ENCODE measurements at regions of chr12 and their contacts with region 1.

Region 1: GRCh38 chr12:18250313-18250916 is 10.9 kb upstream of the PIK3C2G start:
- DNase-seq: no peak
- ATAC-seq: peak in 1 of 4 donors; percentile 59
- H3K4me3 ChIP-seq: no peak overlapping the region
- H3K27ac ChIP-seq: no peak overlapping the region
- H3K4me1 ChIP-seq: no peaks in the 10 kb centered on the region
- H3K27me3 ChIP-seq: no peaks in the 10 kb centered on the region
- CTCF ChIP-seq: peak; percentile 41 to 77 (median 64)
- POLR2A ChIP-seq: no peak

Region 2: DNA sequence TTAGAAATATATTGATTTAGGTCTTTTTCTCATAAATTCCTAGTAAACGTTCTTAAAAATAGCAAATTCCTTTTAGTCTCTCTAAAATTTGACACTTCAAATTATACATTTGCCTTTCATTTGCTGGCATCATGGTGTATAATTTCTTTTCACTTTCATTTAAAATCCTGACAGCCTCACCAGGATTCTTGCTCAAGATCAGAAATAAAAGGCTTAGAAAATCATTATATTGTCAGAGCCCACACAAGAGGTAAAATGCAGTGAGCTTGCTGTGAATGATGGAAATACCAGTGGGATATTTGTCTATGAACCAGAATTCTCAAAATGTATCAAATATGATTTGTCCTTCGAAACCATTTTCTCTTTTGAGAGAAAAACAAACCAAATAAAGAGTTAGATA is 67.3 kb before region 1 on chr12:
- intact Hi-C with region 1: no loop called
- DNase-seq: no peak
- ATAC-seq: no peak
- H3K4me3 ChIP-seq: no peak overlapping the region
- H3K27ac ChIP-seq: no peak overlapping the region
- H3K4me1 ChIP-seq: no peaks in the 10 kb centered on the region
- H3K27me3 ChIP-seq: no peaks in the 10 kb centered on the region
- CTCF ChIP-seq: no peak
- POLR2A ChIP-seq: no peak

Region 3: DNA sequence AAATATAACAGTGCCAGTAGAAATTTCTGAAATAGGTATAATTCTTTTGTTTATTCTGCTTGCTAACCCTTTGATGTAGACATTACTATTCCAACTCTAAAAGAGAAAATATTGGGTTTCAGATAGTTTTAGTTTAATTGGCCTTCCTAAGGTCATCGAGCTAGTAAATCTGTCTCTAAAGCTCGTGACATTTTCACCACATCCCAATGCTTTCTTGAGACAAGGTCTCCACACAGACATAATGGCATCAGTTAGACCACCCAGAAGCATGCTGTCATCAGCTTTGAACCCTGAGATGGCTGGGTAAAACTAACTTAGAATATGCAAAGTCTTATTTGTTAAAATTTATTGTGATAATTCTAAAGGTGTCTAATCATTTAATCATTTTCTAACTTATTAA is 62.9 kb after region 1 on chr12:
- intact Hi-C with region 1: loop called in 1 of 10 experiments (anchors 10 kb)
- DNase-seq: no peak
- ATAC-seq: no peak
- H3K4me3 ChIP-seq: no peak overlapping the region
- H3K27ac ChIP-seq: no peak overlapping the region
- H3K4me1 ChIP-seq: no peaks in the 10 kb centered on the region
- H3K27me3 ChIP-seq: no peaks in the 10 kb centered on the region
- CTCF ChIP-seq: no peak
- POLR2A ChIP-seq: no peak

Region 4: DNA sequence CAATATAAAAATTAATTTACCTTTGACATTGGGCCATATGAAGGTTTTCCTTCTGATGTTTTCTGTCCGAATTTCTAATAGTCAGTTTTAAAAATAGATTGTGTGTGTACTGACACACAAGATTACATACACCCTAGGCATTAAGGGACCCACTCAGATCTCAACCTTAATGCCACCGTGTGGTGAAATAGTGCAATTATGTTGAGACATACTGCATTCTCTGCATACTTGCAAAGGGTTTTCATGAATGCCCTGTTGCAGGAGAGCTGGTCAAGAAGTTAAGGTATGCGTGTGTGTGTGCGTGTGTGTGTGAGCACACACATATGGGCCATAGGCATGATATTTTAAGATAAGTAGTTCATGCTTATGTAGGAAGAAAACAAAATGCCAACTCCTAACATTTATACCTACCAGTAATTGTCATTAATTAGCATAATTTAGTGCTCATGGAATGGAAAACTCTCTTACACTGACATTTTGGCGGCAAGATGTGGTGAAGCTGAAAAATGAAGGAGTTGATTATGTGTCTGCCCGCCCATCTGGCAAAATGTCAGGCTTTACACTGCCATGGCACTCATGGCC is 69.7 kb after region 1 on chr12:
- intact Hi-C with region 1: loop called in 2 of 10 experiments (anchors 2 to 10 kb)
- DNase-seq: peak in 1 of 5 donors; percentile 10
- ATAC-seq: peak in 3 of 4 donors; percentile 61 to 79 (median 65)
- H3K4me3 ChIP-seq: no peak overlapping the region
- H3K27ac ChIP-seq: no peak overlapping the region
- H3K4me1 ChIP-seq: no peaks in the 10 kb centered on the region
- H3K27me3 ChIP-seq: no peaks in the 10 kb centered on the region
- CTCF ChIP-seq: peak; percentile 7 to 59 (median 37)
- POLR2A ChIP-seq: no peak

Region 5: DNA sequence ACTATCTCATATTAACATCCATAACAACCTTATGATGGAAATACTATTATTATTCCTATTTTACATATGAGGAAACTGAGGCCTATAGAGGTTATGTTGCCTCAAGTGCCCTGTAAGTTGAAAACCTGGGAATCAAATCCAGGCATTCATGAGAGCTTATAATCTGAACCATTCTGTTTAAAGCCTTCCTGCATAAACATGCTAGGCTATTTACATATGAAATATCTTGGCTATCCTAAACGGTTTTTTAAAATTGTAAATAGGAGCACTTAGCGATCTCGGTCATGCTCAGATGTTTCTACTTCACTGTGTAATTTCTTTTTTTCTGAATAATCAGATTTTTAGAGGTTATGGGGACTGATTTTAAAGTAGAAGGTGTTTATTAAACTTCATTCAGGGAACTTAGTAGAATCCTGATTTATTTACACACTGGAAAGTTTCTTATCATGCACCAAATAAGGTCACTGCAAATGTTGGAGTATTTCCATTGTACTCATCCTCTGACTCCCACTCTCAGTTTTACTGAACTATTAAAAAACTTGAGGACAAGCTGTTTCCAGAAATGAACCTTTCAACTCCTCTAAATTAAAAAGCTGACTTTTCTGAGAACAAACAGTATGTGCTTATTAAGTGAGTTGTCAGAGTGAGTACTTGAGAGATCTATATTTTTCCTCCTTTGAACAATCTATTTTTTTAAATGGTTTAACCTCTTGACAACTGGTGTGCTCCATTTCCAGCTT is 152.6 kb after region 1 on chr12:
- intact Hi-C with region 1: no loop called
- DNase-seq: no peak
- ATAC-seq: no peak
- H3K4me3 ChIP-seq: no peak overlapping the region
- H3K27ac ChIP-seq: no peak overlapping the region
- H3K4me1 ChIP-seq: peaks cover 0 to 2% (median 0%) of the 10 kb centered on the region in 12 donors
- H3K27me3 ChIP-seq: no peaks in the 10 kb centered on the region
- CTCF ChIP-seq: no peak
- POLR2A ChIP-seq: no peak